ENCODE measurements at regions of chr19 and their contacts with region 1.

Region 1: DNA sequence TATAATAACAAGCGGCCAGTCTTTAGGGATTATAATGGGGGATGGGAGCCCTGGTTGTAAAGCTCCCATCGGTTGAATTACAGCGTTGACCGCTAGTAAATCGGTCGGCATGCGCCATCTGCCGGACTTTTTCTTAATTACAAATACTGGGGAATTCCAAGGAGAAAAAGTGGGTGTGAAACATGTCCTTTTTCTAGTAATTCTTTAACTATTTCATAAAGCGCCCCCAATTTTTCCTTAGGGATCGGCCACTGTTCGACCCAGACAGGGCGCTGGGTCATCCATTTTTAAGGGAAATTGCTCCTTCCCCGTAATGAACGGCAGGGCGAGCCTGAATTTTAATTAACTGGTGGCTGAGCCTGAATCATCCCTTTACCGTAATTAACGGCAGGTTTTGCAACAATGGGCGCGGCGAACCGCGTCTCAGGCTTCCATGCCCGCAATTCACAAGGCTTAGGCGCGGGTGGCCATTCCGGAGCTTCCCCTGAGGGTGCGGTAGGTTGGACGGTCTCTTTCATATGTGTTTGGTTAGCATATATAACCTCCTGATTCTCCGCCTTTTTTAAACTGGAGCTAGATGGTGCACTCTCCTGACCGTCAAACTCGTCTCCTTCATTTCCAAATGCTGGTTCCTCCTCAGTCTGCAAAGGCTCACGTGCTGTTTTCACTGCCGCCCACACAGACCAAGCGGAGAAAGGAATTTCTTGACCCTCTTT is 30.2 kb upstream of the EVI5L start:
- ATAC-seq: peak; percentile 55 to 88 (median 68)
- H3K4me3 ChIP-seq: peak overlapping the region in 2 of 5 donors; percentile 11 to 24
- H3K27ac ChIP-seq: no peak overlapping the region
- H3K4me1 ChIP-seq: no peaks in the 10 kb centered on the region

Region 2: DNA sequence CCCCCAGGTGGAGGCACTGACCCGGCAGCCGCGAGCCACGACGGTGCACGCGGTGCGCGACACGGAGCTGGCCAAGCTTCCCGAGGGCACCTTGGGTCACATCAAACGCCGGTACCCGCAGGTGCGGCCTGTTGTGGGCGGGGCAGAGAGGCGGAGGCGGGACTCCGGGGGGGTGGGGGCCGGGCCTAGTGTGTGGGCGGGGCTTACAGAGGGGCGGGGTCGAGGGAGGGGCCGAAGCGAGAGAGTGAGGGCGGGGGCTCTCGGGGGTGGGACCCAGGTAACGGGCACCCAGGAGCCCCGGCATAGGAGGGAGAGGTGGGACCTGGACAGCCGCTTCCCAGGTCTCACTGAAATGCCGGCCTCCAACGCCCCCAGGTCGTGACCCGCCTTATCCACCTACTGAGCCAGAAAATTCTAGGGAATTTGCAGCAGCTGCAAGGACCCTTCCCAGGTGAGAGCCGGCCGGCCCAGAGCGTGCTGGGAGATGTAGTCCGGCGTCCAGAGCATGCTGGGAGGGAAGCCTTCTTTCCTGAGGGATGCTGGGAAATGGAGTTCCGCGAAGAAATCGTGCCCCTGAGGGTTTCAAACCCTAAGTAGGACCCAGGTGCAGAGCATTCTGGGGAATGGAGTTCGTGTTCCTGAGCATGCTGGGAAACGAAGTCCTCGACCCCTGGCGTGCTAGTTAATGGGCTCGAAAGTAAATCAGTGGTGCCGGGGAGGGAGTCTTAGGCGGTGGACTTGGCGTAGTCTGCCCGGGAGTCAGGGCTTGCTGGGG is 248.6 kb before region 1 on chr19:
- in situ Hi-C with region 1: loop called in 1 of 9 experiments (anchors 25 kb)
- ATAC-seq: peak in 7 of 8 experiments; percentile 48 to 97 (median 94)
- H3K4me3 ChIP-seq: peak overlapping the region; percentile 15 to 26 (median 19)
- H3K27ac ChIP-seq: no peak overlapping the region
- H3K4me1 ChIP-seq: no peaks in the 10 kb centered on the region

Region 3: GRCh38 chr19:7595466-7596133 is 204.2 kb before region 1 on chr19 and contains the start of gene CAMSAP3:
- in situ Hi-C with region 1: loop called in 2 of 9 experiments (anchors 25 kb)
- ATAC-seq: peak; percentile 79 to 95 (median 92)
- H3K4me3 ChIP-seq: peak within 1 kb of the TSS; percentile 41 to 66 (median 50)
- H3K27ac ChIP-seq: no peak within 1 kb of the TSS
- H3K4me1 ChIP-seq: peaks cover 0 to 8% of the 10 kb centered on the region in 2 donors
- total RNA-seq, gene CAMSAP3: 0.46 to 7.9 (median 4.3) TPM

Region 4: DNA sequence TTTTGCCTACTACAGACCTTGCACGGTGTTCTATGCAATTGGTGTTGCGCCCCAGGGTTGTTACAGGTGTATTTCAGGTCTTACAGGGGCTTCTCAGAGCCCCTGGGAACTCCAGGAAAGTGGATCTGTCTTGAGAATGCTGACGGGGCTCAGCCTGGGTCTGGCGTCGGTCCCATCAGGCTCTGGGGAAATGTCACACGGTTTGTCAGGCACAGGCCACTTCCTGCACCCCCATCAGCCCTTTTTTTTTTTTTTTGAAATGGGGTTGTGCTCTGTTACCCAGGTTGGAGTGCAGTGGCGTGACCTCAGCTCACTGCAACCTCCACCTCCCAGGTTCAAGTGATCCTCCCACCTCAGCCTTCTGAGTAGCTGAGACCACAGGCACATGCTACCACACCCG is 81.1 kb before region 1 on chr19:
- in situ Hi-C with region 1: no loop called
- ATAC-seq: no peak
- H3K4me3 ChIP-seq: no peak overlapping the region
- H3K27ac ChIP-seq: no peak overlapping the region
- H3K4me1 ChIP-seq: peaks cover 0 to 3% of the 10 kb centered on the region in 2 donors

Region 5: DNA sequence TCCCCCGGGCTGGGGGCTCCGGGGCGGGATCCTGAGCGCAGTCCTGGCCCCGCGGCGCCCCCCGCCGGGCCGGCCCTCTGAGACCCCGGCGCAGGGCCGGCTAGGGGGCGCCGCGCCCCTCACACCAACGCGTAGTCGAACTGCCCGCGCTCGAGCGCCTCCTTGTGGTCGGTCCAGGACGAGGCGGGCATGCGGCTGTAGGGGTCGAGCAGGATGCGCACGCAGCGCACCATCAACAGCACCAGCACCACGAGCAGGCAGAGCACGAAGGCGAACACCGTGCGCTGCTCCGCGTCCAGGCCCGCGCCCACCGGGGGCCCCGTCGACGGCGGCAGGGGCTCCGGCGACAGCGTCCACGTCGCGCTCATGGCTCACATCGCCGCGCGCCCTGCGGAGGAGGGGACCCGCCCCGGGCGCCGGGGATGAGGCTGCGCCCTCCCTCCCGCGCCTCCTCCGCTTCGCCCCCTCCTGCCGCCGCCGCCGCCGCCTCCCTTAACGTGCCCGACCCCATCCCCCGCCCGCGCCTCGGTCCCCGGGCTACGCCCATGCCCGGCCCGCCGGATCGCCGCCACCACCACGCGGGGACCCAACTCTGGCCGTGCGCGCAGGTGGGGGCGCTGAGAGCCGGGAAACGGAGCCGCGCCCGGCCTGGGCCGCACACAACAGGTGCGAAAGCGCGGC is 125.5 kb after region 1 on chr19:
- in situ Hi-C with region 1: no loop called
- ATAC-seq: peak; percentile 7 to 50 (median 46)
- H3K4me3 ChIP-seq: peak overlapping the region; percentile 64 to 79 (median 71)
- H3K27ac ChIP-seq: peak overlapping the region; percentile 79 to 81
- H3K4me1 ChIP-seq: peaks cover 16 to 25% of the 10 kb centered on the region in 2 donors

Measured in motor neuron (in vitro differentiated cells).